Sciatic nerve (tissue), 2 donors: ENCODE measurements at regions of chr9 and their contacts with region 1.

Region 1: GRCh38 chr9:35546853-35547252 is 56.9 kb downstream of the RUSC2 start:
- DNase-seq: no peak
- ATAC-seq: peak; percentile 30

Region 2: DNA sequence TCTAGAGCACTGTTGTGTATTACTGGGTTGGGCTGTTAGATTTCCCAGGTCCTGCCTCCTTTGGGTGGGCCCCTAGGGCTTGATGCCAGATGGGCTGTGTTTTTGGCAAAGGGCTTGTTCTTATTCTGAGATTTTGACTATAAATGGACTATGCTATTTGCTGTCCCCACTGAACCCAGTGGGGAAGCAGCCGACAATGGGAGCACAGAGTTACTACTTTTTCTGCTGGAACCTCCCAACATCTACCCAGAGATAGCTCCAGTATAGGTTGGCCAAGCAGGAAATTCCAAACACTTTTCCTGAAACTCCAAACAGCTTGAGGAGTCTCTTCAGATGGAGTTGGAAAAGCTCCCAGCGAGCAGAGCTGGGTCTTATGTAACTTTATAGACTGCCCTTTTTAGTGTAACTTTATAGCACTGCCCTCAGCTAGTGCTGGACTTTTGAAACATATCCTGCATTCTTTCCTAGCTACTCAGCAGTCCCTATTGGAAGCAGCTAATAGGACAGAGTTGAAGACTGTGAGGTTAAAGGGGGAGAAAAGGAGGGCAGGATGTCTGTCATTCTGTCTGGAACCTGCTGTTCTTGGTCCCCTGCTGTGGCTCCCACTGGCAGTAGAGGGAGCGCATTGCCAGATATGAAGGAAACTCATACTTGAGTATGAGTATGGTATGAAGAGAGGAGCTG is 36.0 kb before region 1 on chr9:
- intact Hi-C with region 1: loop called (anchors 1 kb)
- DNase-seq: peak; percentile 89
- ATAC-seq: peak; percentile 96

Region 3: GRCh38 chr9:35688558-35689350 is 141.9 kb after region 1 on chr9:
- intact Hi-C with region 1: no loop called
- DNase-seq: no peak
- ATAC-seq: no peak

Region 4: DNA sequence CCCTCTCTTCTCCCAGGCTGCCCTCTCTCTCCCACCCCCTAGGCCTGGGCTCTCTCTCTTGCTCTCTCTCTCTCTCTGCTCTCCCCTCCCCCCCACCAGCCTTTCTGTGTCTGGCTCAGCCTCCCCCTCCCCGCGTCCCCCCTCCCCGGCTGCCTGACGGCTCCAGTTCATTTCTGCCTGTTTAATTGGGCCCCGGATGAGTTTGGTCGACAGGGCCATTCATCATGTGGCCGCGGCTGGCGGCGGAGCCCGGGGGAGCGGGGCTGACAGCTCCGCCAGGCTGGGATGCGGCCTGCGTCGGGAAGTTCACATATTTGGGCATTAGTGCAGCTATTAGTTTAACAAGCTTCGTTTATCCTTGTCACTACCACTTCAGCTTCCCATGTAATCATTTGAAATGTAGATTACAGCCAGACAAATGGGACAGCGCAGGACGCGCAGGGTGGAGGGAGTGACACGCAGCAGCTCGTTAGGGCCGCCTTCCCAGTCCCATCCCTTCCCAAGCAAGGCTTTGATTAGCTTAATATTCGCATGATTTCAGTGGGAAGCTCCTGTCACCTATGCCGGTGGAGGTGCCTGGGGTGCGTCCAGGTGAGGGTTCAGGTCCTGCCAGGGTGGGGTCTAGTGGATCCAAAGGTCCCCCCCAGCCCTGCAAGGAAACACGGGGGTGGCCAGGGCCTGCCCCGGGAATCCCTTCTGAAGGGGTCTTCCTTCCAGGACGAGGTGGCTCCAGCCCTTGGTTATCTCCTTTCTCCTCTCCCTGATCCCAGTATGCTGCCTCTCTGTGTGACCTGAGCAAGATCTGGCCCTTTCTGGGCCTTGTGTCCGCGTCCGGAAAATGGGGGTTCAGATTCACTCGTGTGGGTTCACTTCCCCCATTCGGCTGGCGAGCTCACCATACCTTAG is 1272.4 kb after region 1 on chr9:
- intact Hi-C with region 1: no loop called
- DNase-seq: peak; percentile 45
- ATAC-seq: peak; percentile 47